ENCODE measurements at regions of chr1 and their contacts with region 1.

Region 1: DNA sequence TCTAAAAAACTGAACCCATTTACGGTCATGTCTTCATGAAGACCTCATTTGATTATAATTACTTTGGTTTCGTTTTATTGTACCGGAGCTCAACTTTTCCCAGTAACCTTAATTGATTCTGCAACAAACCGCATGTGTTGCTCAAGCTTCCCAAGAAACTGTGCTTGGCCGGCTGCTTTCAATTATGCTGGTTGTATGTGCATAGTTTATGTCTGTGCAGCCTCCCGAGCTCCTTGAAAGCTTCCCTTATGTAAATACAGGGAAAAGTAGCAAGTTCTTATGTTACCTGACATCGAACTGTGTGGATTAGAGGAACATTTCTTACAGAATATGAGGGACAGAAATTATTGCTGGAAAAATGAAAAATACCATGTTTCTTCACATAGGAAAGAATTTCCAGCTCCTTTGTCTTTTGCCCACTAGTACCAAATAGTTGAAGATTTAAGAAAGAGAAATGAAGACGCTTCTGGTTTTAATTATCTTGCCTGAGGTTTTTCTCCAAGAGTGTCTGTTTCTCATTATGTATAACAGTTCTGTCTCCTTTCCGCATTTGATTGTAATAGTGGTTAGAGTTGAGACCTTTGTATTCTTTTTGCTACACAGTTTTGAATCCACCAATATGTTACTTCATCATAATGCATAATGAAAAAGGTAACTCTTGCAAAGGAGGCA is 2.1 kb downstream of the VCAM1 start:
- DNase-seq: peak; percentile 96
- ATAC-seq: peak; percentile 78
- H3K4me3 ChIP-seq: peak overlapping the region; percentile 51
- H3K27ac ChIP-seq: peak overlapping the region; percentile 96; the same call in 1 of the 2 replicates
- H3K4me1 ChIP-seq: peaks cover 4% of the 10 kb centered on the region
- H3K27me3 ChIP-seq: no peaks in the 10 kb centered on the region
- CTCF ChIP-seq: no peak
- POLR2A ChIP-seq: no peak
- RAD21 ChIP-seq: peak; percentile 27; the same call in 1 of the 2 replicates

Region 2: DNA sequence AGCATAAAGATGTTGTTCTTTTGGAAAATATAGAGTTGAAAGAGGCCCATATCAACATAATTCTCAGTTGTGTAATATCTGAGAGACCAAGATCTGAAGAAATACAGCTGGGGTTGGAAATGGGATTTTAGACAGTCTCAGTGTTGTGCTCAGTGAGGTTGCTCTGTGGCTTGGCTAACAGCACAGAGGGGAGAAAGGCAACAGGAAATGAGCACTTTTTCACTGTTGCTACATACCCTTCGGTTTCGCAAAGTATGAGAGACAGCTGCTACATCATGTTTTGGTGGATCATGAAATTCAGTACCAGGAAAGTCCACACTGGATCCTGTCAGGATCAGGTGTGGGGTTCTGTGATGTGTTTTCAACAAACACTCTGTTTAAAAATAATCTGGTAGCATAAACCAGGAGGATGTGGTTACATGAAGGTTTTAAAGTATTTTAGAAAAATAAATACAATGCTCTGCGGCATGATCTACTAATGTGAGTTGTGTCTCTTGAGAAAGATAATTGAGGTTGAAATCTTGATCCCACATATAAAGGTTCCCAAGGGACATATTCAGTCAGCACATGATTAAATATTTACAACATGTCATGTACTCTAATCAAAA is 190.7 kb before region 1 on chr1:
- CTCF ChIA-PET with region 1: no interaction called
- POLR2A ChIA-PET with region 1: no interaction called
- dilution Hi-C with region 1: no loop called
- in situ Hi-C with region 1: no loop called
- intact Hi-C with region 1: loop called (anchors 5 kb)
- DNase-seq: peak; percentile 83
- ATAC-seq: peak; percentile 78
- H3K4me3 ChIP-seq: no peak overlapping the region
- H3K27ac ChIP-seq: peak overlapping the region; percentile 80; the same call in 1 of the 2 replicates
- H3K4me1 ChIP-seq: peaks cover 13% of the 10 kb centered on the region
- H3K27me3 ChIP-seq: peaks cover 11% of the 10 kb centered on the region
- CTCF ChIP-seq: no peak
- POLR2A ChIP-seq: no peak
- RAD21 ChIP-seq: no peak

Region 3: GRCh38 chr1:100597061-100597741 is 124.5 kb before region 1 on chr1:
- CTCF ChIA-PET with region 1: no interaction called
- POLR2A ChIA-PET with region 1: no interaction called
- dilution Hi-C with region 1: no loop called
- in situ Hi-C with region 1: no loop called
- intact Hi-C with region 1: loop called (anchors 2 kb)
- DNase-seq: peak; percentile 90
- ATAC-seq: peak; percentile 93
- H3K4me3 ChIP-seq: no peak overlapping the region
- H3K27ac ChIP-seq: peak overlapping the region; percentile 85
- H3K4me1 ChIP-seq: peaks cover 3% of the 10 kb centered on the region
- H3K27me3 ChIP-seq: no peaks in the 10 kb centered on the region
- CTCF ChIP-seq: no peak
- POLR2A ChIP-seq: no peak; the same call in 1 of the 2 replicates
- RAD21 ChIP-seq: no peak

Region 4: DNA sequence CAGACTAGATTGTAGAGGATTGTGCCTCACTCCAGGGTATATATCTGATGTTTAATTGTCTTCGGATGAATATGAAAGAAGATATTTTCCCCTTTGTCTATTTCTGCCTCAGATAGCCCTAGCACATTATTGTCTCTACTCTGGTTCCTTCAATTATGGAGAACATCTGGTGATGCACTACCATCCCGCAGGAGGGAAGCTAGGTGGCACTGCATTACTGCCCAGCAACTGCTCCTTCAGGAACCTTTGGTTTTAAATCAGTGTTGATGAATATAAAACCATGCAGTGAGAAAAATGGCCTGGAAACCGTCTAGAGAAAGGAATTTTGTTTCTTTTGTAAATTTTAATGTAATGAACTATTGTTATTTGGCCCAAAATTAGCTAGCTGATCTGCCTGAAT is 115.2 kb before region 1 on chr1:
- CTCF ChIA-PET with region 1: interaction called, 10 read pairs
- POLR2A ChIA-PET with region 1: no interaction called
- dilution Hi-C with region 1: no loop called
- in situ Hi-C with region 1: no loop called
- intact Hi-C with region 1: loop called (anchors 1 kb)
- DNase-seq: peak; percentile 74
- ATAC-seq: peak; percentile 91
- H3K4me3 ChIP-seq: no peak overlapping the region
- H3K27ac ChIP-seq: no peak overlapping the region
- H3K4me1 ChIP-seq: peaks cover 4% of the 10 kb centered on the region; the same call in 1 of the 2 replicates
- H3K27me3 ChIP-seq: no peaks in the 10 kb centered on the region
- CTCF ChIP-seq: peak; percentile 81
- POLR2A ChIP-seq: peak; percentile 34; the same call in 1 of the 2 replicates
- RAD21 ChIP-seq: peak; percentile 89

Region 5: GRCh38 chr1:100622037-100622436 is 99.6 kb before region 1 on chr1:
- CTCF ChIA-PET with region 1: no interaction called
- POLR2A ChIA-PET with region 1: no interaction called
- dilution Hi-C with region 1: no loop called
- in situ Hi-C with region 1: no loop called
- intact Hi-C with region 1: loop called (anchors 2 kb)
- DNase-seq: peak; percentile 99
- ATAC-seq: peak; percentile 73
- H3K4me3 ChIP-seq: no peak overlapping the region
- H3K27ac ChIP-seq: peak overlapping the region; percentile 93; the same call in 1 of the 2 replicates
- H3K4me1 ChIP-seq: peaks cover 21% of the 10 kb centered on the region
- H3K27me3 ChIP-seq: no peaks in the 10 kb centered on the region
- CTCF ChIP-seq: no peak
- POLR2A ChIP-seq: no peak
- RAD21 ChIP-seq: peak; percentile 20

Region 6: GRCh38 chr1:100671601-100672000 is 50.1 kb before region 1 on chr1:
- CTCF ChIA-PET with region 1: interaction called, 3 read pairs
- POLR2A ChIA-PET with region 1: no interaction called
- dilution Hi-C with region 1: no loop called
- in situ Hi-C with region 1: no loop called
- intact Hi-C with region 1: loop called (anchors 2 kb)
- DNase-seq: peak; percentile 60
- ATAC-seq: peak; percentile 70
- H3K4me3 ChIP-seq: no peak overlapping the region
- H3K27ac ChIP-seq: no peak overlapping the region
- H3K4me1 ChIP-seq: peaks cover 3% of the 10 kb centered on the region
- H3K27me3 ChIP-seq: no peaks in the 10 kb centered on the region
- CTCF ChIP-seq: no peak; the same call in 1 of the 2 replicates
- POLR2A ChIP-seq: no peak
- RAD21 ChIP-seq: peak; percentile 29; the same call in 1 of the 2 replicates

Region 7: GRCh38 chr1:100750005-100750885 is 28.6 kb after region 1 on chr1:
- CTCF ChIA-PET with region 1: no interaction called
- POLR2A ChIA-PET with region 1: no interaction called
- dilution Hi-C with region 1: no loop called
- in situ Hi-C with region 1: no loop called
- intact Hi-C with region 1: no loop called
- DNase-seq: no peak
- ATAC-seq: no peak
- H3K4me3 ChIP-seq: no peak overlapping the region
- H3K27ac ChIP-seq: no peak overlapping the region
- H3K4me1 ChIP-seq: no peaks in the 10 kb centered on the region
- H3K27me3 ChIP-seq: no peaks in the 10 kb centered on the region
- CTCF ChIP-seq: no peak
- POLR2A ChIP-seq: no peak
- RAD21 ChIP-seq: no peak